Activated CD8-positive, alpha-beta T cell treated with anti-CD3 and anti-CD28 coated beads for 36 hours (primary cell): ENCODE measurements at regions of chr6 and their contacts with region 1.

Region 1: GRCh38 chr6:83067448-83068413 is at the start of gene DOP1A:
- DNase-seq: peak; percentile 99
- ATAC-seq: peak; percentile 85
- H3K4me3 Mint-ChIP-seq: peak within 1 kb of the TSS; percentile 90
- H3K27ac Mint-ChIP-seq: peak within 1 kb of the TSS; percentile 86
- H3K4me1 Mint-ChIP-seq: peaks cover 47% of the 10 kb centered on the region
- H3K27me3 Mint-ChIP-seq: no peaks in the 10 kb centered on the region
- CTCF ChIP-seq: peak; percentile 85
- total RNA-seq, gene DOP1A: 6.6 to 7.7 TPM

Region 2: GRCh38 chr6:82954937-82955577 is 112.7 kb before region 1 on chr6:
- CTCF ChIA-PET with region 1: no interaction called
- POLR2A ChIA-PET with region 1: no interaction called
- intact Hi-C with region 1: no loop called
- DNase-seq: no peak
- ATAC-seq: no peak
- H3K4me3 Mint-ChIP-seq: no peak overlapping the region
- H3K27ac Mint-ChIP-seq: no peak overlapping the region
- H3K4me1 Mint-ChIP-seq: no peaks in the 10 kb centered on the region
- H3K27me3 Mint-ChIP-seq: no peaks in the 10 kb centered on the region
- CTCF ChIP-seq: no peak

Region 3: DNA sequence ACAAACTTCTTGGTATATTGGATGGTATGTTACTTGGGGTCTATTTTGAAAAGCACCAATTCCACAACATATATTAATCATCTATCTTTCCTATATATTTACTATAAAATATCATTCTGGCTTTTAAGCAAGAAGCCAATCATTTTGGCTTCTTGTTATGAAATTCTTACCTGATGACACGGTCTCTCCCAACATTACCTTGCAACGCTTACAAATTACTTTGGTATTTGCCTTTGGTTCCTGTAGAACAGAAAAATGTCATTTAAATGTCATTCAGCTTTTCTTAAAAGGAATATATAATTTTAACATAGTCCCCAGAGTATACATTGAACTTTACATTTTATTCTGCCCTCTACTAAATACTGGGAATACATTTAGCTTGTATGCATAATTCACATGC is 29.5 kb before region 1 on chr6:
- CTCF ChIA-PET with region 1: interaction called, 10 read pairs
- POLR2A ChIA-PET with region 1: no interaction called
- intact Hi-C with region 1: no loop called
- DNase-seq: no peak
- ATAC-seq: no peak
- H3K4me3 Mint-ChIP-seq: no peak overlapping the region
- H3K27ac Mint-ChIP-seq: no peak overlapping the region
- H3K4me1 Mint-ChIP-seq: no peaks in the 10 kb centered on the region
- H3K27me3 Mint-ChIP-seq: no peaks in the 10 kb centered on the region
- CTCF ChIP-seq: no peak

Region 4: GRCh38 chr6:83096791-83097190 is 29.1 kb after region 1 on chr6:
- CTCF ChIA-PET with region 1: interaction called, 75 read pairs
- POLR2A ChIA-PET with region 1: no interaction called
- intact Hi-C with region 1: no loop called
- DNase-seq: no peak
- ATAC-seq: no peak
- H3K4me3 Mint-ChIP-seq: no peak overlapping the region
- H3K27ac Mint-ChIP-seq: no peak overlapping the region
- H3K4me1 Mint-ChIP-seq: peaks cover 6% of the 10 kb centered on the region
- H3K27me3 Mint-ChIP-seq: no peaks in the 10 kb centered on the region
- CTCF ChIP-seq: no peak

Region 5: GRCh38 chr6:83132121-83132520 is 64.4 kb after region 1 on chr6:
- CTCF ChIA-PET with region 1: interaction called, 14 read pairs
- POLR2A ChIA-PET with region 1: no interaction called
- intact Hi-C with region 1: no loop called
- DNase-seq: no peak
- ATAC-seq: no peak
- H3K4me3 Mint-ChIP-seq: no peak overlapping the region
- H3K27ac Mint-ChIP-seq: no peak overlapping the region
- H3K4me1 Mint-ChIP-seq: no peaks in the 10 kb centered on the region
- H3K27me3 Mint-ChIP-seq: no peaks in the 10 kb centered on the region
- CTCF ChIP-seq: no peak

Region 6: GRCh38 chr6:83192871-83193746 is 125.4 kb after region 1 on chr6 and contains the starts of genes PGM3 and RWDD2A:
- CTCF ChIA-PET with region 1: interaction called, 70 read pairs
- POLR2A ChIA-PET with region 1: interaction called, 4 read pairs
- intact Hi-C with region 1: loop called (anchors 5 kb)
- DNase-seq: peak; percentile 89
- ATAC-seq: peak; percentile 98
- H3K4me3 Mint-ChIP-seq: peak within 1 kb of the TSS; percentile 96
- H3K27ac Mint-ChIP-seq: peak within 1 kb of the TSS; percentile 91
- H3K4me1 Mint-ChIP-seq: peaks cover 48% of the 10 kb centered on the region
- H3K27me3 Mint-ChIP-seq: no peaks in the 10 kb centered on the region
- CTCF ChIP-seq: no peak
- total RNA-seq, gene PGM3: 13.2 to 17.5 TPM
- total RNA-seq, gene RWDD2A: 1.5 to 1.6 TPM

Region 7: GRCh38 chr6:83215131-83216047 is 147.7 kb after region 1 on chr6:
- CTCF ChIA-PET with region 1: interaction called, 187 read pairs
- POLR2A ChIA-PET with region 1: interaction called, 3 read pairs
- intact Hi-C with region 1: loop called (anchors 1 kb)
- DNase-seq: peak; percentile 79
- ATAC-seq: peak; percentile 99
- H3K4me3 Mint-ChIP-seq: no peak overlapping the region
- H3K27ac Mint-ChIP-seq: no peak overlapping the region
- H3K4me1 Mint-ChIP-seq: no peaks in the 10 kb centered on the region
- H3K27me3 Mint-ChIP-seq: peaks cover 6% of the 10 kb centered on the region
- CTCF ChIP-seq: peak; percentile 74